Activated naive CD4-positive, alpha-beta T cell treated with anti-CD3 and anti-CD28 coated beads, Interleukin-2, amount 10 ng/mL, durations not matched to agents 7 days and 5 days (primary cell): ENCODE measurements at regions of chr2 and their contacts with region 1.

Region 1: DNA sequence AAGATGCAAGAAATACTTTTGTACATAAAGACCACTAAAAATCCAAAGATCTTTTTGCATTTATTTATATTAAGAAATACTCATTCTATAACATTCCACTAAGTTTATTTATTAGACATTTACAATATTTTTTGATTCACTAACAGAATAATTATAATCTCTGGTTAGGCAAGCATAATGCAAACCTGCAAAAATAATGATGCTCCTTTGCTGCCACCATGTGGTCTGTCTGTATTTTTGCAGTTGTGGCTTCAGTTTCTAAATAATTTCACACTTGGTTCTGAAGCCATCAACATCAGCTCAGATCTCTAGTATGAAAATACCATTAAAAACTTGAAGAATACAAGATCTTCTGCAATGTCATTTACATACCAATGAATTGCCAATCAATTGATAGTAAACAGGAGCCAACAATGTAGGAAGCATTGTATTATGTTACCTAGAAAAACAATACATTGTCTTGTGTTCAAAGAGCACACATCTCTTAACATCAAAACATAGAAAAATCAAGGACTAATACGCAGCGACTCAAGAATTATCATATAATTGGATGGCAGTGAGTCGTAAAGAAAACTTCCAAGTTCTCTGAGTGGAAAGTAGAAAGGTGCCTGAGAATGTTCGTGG is 28.8 kb upstream of the WDR75 start:
- DNase-seq: peak; percentile 65
- H3K4me3 Mint-ChIP-seq: no peak overlapping the region
- H3K27ac Mint-ChIP-seq: no peak overlapping the region
- H3K4me1 Mint-ChIP-seq: peaks cover 9% of the 10 kb centered on the region
- H3K27me3 Mint-ChIP-seq: no peaks in the 10 kb centered on the region

Region 2: GRCh38 chr2:189092936-189093335 is 319.5 kb before region 1 on chr2:
- CTCF ChIA-PET with region 1: interaction called, 20 read pairs
- DNase-seq: no peak
- H3K4me3 Mint-ChIP-seq: no peak overlapping the region
- H3K27ac Mint-ChIP-seq: no peak overlapping the region
- H3K4me1 Mint-ChIP-seq: peaks cover 13% of the 10 kb centered on the region
- H3K27me3 Mint-ChIP-seq: no peaks in the 10 kb centered on the region

Region 3: DNA sequence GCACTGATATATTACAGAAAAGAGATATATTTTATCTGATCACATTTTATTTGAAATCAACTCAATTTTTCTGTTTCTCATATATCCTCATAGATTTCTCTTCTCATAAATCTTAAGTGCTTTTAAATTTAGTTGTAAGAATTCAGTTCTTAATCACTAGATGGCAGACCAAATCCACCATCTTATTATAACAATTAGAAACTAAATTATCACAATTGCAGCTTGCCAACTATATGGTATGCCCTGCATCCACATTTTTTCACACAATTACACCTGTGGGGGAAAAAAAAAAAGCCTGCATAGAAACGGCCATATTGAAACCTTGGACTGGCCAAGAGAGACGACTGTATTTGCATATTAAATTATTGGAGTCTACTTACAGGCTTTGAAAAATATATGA is 297.3 kb before region 1 on chr2:
- CTCF ChIA-PET with region 1: interaction called, 15 read pairs
- DNase-seq: no peak
- H3K4me3 Mint-ChIP-seq: no peak overlapping the region
- H3K27ac Mint-ChIP-seq: no peak overlapping the region
- H3K4me1 Mint-ChIP-seq: no peaks in the 10 kb centered on the region
- H3K27me3 Mint-ChIP-seq: no peaks in the 10 kb centered on the region

Region 4: GRCh38 chr2:189142893-189143759 is 269.3 kb before region 1 on chr2:
- CTCF ChIA-PET with region 1: interaction called, 47 read pairs
- DNase-seq: peak; percentile 61
- H3K4me3 Mint-ChIP-seq: no peak overlapping the region
- H3K27ac Mint-ChIP-seq: no peak overlapping the region
- H3K4me1 Mint-ChIP-seq: no peaks in the 10 kb centered on the region
- H3K27me3 Mint-ChIP-seq: no peaks in the 10 kb centered on the region

Region 5: DNA sequence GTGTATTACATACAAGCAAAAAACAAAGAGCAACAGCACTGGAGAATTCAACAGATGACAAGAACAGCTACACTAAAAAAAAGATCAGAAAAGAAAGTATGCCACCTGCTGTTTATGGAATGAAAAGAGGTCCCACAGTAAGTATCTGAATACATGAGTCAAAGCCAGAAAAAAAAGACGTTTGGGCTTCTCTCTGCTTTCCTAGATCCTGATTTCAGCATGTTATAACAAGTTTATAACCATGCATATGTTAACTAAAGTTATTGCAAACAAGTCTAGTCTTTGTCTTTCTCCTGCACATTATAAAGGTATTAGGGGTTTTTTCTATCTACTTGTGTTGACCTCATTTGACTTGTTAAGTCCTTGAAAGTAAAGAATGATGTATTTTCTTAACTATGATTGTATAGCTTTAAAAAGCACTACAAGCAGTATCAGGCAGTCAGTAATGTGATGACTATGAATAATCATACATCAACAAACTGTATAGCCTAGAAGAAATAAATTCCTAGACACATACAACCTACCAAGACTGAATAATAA is 124.4 kb before region 1 on chr2:
- CTCF ChIA-PET with region 1: interaction called, 17 read pairs
- DNase-seq: no peak
- H3K4me3 Mint-ChIP-seq: no peak overlapping the region
- H3K27ac Mint-ChIP-seq: no peak overlapping the region
- H3K4me1 Mint-ChIP-seq: peaks cover 8% of the 10 kb centered on the region
- H3K27me3 Mint-ChIP-seq: no peaks in the 10 kb centered on the region